Testis (tissue), 5 donors: ENCODE measurements at regions of chr12 and their contacts with region 1.

Region 1: GRCh38 chr12:54191550-54192022 is 2.8 kb upstream of the SMUG1 start:
- DNase-seq: peak; percentile 94
- H3K4me3 ChIP-seq: no peak overlapping the region
- H3K27ac ChIP-seq: no peak overlapping the region
- H3K4me1 ChIP-seq: peaks cover 16% of the 10 kb centered on the region
- H3K27me3 ChIP-seq: no peaks in the 10 kb centered on the region
- CTCF ChIP-seq: peak; percentile 53 to 79 (median 70)
- POLR2A ChIP-seq: no peak

Region 2: DNA sequence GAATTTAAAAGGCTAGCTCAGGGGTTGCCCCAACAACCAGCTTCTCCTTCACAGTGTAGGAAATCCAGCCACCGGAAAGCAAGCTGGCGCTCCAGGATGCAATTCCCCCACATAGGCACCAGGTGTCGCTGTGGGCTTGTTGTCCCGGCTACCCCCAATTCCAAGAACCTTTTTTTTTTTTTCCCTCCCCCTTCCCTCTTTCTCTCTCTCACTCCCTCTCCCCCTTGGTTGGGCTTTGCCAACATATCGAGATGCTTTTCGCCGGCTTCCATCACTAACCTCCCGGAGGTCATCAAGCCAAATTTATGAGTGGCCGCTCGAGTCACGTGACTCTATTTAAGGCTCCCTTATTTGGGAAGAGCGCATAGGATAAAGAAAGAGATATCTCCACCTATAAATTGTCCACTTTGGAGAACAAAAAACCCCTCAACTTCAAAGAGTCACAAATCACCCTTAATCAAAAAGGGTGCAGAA is 158.9 kb before region 1 on chr12 and contains the start of gene HOXC5:
- intact Hi-C with region 1: loop called (anchors 5 kb)
- DNase-seq: peak; percentile 86
- H3K4me3 ChIP-seq: peak within 1 kb of the TSS; percentile 29 to 52
- H3K27ac ChIP-seq: peak within 1 kb of the TSS in 1 of 2 donors; percentile 89
- H3K4me1 ChIP-seq: peaks cover 20% of the 10 kb centered on the region
- H3K27me3 ChIP-seq: no peaks in the 10 kb centered on the region
- CTCF ChIP-seq: peak; percentile 90 to 99 (median 96)
- POLR2A ChIP-seq: no peak
- total RNA-seq, gene HOXC5: 1.9 to 5.5 TPM

Region 3: GRCh38 chr12:54359033-54359761 is 167.6 kb after region 1 on chr12:
- intact Hi-C with region 1: no loop called
- DNase-seq: peak; percentile 98
- H3K4me3 ChIP-seq: peak overlapping the region; percentile 60 to 70
- H3K27ac ChIP-seq: peak overlapping the region; percentile 91 to 95
- H3K4me1 ChIP-seq: peaks cover 49% of the 10 kb centered on the region
- H3K27me3 ChIP-seq: no peaks in the 10 kb centered on the region
- CTCF ChIP-seq: no peak
- POLR2A ChIP-seq: no peak